ENCODE measurements at regions of chr11 and their contacts with region 1.

Region 1: DNA sequence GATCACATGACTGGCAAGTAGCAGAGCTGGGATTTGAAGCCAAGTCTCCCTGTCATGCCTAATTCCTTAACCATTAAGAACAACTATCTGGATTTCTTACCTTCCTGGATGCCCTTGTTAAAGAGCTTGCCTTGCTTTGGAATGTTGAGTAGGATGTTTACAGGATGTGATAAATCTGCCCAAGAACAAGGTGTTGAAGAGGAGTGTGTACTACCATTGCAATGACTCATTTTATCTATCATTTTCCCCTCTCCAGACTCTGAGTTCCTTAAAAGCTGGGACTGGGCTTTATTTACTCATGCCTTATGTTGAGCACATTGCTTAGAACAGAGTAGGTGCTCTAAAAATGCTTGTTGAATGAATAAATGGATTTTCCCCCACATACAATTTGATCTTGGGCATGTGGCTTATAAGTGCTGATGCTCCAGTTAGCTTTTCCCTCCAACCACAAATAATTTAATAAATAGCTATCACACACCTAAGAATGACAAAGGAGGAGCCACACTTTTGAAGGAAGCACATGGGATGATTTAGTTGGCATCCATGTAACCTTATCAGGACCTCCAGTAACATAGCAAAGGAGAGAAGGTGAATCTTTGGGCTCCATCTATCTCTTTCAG is 268.6 kb upstream of the SESN3 start:
- DNase-seq: no peak
- ATAC-seq: no peak

Region 2: DNA sequence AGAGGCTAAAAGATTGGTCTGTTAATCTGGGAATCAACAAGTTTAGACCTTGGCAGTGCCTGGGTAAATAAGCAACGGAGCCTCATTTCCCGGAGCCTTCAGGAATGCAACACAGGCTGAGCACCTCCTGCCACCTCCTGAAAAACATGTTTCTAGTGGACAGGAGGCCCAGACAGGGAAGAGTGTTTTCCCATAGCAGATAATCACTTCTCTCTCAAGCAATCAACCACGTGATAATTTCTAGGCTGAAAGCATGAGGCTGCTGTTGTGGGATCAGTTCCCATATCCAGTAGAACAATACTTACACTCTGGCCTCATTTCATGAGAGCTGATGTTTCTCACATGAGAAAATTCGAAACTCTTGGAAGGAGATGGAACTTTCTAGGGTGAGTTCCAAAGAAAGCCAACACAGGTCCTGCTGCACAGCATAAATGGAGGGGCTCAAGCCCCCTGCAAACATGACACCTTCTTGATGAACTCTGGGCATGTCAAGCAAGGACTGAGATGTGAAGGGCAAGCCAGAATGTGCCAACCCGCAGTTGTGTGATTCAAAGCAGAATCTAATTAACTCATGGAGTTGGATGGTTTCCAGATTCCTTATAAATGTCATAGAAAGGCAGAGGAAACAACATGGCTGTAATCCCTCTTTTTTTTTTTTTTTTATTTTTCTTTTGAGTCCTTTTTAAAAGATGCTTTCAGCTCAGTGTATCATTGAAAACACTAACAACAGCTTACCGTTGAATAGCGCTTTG is 40.2 kb before region 1 on chr11:
- intact Hi-C with region 1: loop called (anchors 2 kb)
- DNase-seq: no peak
- ATAC-seq: peak; percentile 84